ENCODE measurements at regions of chr6 and their contacts with region 1.

Region 1: GRCh38 chr6:169723200-169723909 is 945 bp downstream of the PHF10 start:
- DNase-seq: peak; percentile 73
- ATAC-seq: peak; percentile 47
- H3K4me3 Mint-ChIP-seq: peak overlapping the region; percentile 94
- H3K27ac Mint-ChIP-seq: peak overlapping the region; percentile 97
- H3K4me1 Mint-ChIP-seq: peaks cover 51% of the 10 kb centered on the region
- H3K27me3 Mint-ChIP-seq: no peaks in the 10 kb centered on the region
- CTCF ChIP-seq: no peak

Region 2: DNA sequence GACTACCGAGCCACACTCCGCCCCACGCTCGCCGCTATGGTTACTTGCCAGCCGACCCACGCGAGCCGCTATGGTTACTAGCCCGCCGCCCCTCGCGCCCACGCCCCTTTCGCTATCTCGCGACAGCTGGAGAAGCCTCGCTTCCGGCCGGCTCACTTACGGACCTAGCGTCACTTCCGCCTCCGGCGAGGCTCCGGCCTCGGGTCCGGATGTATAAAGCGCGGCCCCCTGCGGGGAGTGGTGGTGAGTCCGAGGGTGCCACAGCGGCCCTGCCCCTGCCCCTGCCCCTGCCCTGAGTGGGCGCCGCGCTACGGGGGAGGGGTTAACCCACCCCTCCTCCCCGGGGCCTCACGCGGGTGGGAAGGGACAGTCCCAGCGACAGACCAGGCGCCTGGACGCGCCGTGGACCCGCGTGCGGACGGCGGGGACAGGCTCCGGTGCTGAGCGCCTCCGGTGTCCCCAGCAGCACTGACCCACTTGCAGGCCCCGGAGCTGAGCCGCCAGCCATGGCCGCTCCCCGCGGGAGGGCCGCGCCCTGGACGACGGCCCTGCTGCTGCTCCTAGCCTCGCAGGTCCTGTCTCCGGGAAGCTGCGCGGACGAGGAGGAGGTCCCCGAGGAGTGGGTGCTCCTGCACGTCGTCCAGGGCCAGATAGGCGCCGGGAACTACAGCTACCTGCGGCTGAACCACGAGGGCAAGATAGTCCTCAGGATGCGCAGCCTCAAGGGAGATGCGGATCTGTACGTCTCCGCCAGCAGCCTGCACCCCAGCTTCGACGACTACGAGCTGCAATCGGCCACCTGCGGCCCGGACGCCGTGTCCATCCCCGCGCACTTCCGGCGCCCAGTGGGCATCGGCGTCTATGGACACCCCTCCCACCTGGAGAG is 21.2 kb before region 1 on chr6 and contains the starts of genes C6orf120 and WDR27:
- CTCF ChIA-PET with region 1: interaction called, 34 read pairs
- POLR2A ChIA-PET with region 1: interaction called, 95 read pairs
- intact Hi-C with region 1: loop called (anchors 2 kb)
- DNase-seq: peak; percentile 98
- ATAC-seq: peak; percentile 93
- H3K4me3 Mint-ChIP-seq: peak within 1 kb of the TSS; percentile 93
- H3K27ac Mint-ChIP-seq: peak within 1 kb of the TSS; percentile 93
- H3K4me1 Mint-ChIP-seq: peaks cover 49% of the 10 kb centered on the region
- H3K27me3 Mint-ChIP-seq: no peaks in the 10 kb centered on the region
- CTCF ChIP-seq: no peak
- total RNA-seq, gene C6orf120: 14.2 to 16.3 TPM
- total RNA-seq, gene WDR27: 48.8 to 49.6 TPM

Region 3: GRCh38 chr6:169709293-169709692 is 14.1 kb before region 1 on chr6:
- CTCF ChIA-PET with region 1: interaction called, 34 read pairs
- POLR2A ChIA-PET with region 1: interaction called, 28 read pairs
- intact Hi-C with region 1: no loop called
- DNase-seq: no peak
- ATAC-seq: peak; percentile 39
- H3K4me3 Mint-ChIP-seq: no peak overlapping the region
- H3K27ac Mint-ChIP-seq: peak overlapping the region; percentile 51
- H3K4me1 Mint-ChIP-seq: peaks cover 40% of the 10 kb centered on the region
- H3K27me3 Mint-ChIP-seq: no peaks in the 10 kb centered on the region
- CTCF ChIP-seq: no peak

Region 4: GRCh38 chr6:169751242-169752073 is 28.1 kb after region 1 on chr6 and contains the starts of genes DYNLT2 and ERMARD:
- CTCF ChIA-PET with region 1: interaction called, 6 read pairs
- POLR2A ChIA-PET with region 1: interaction called, 73 read pairs
- intact Hi-C with region 1: loop called (anchors 2 kb)
- DNase-seq: peak; percentile 94
- ATAC-seq: peak; percentile 97
- H3K4me3 Mint-ChIP-seq: peak within 1 kb of the TSS; percentile 100
- H3K27ac Mint-ChIP-seq: peak within 1 kb of the TSS; percentile 100
- H3K4me1 Mint-ChIP-seq: peaks cover 28% of the 10 kb centered on the region
- H3K27me3 Mint-ChIP-seq: no peaks in the 10 kb centered on the region
- CTCF ChIP-seq: no peak
- total RNA-seq, gene DYNLT2: 2.2 to 2.4 TPM
- total RNA-seq, gene ERMARD: 24.9 to 26.6 TPM

Measured in activated CD8-positive, alpha-beta T cell treated with anti-CD3 and anti-CD28 coated beads for 36 hours (primary cell).